OCI-LY7 (cell line): ENCODE measurements at regions of chr7 and their contacts with region 1.

Region 1: GRCh38 chr7:128425850-128426249 is 16.1 kb upstream of the IMPDH1 start:
- DNase-seq: peak; percentile 63
- H3K4me3 ChIP-seq: no peak overlapping the region
- H3K27ac ChIP-seq: no peak overlapping the region
- H3K4me1 ChIP-seq: no peaks in the 10 kb centered on the region
- CTCF ChIP-seq: peak; percentile 93

Region 2: GRCh38 chr7:128398016-128398840 is 27.6 kb before region 1 on chr7:
- CTCF ChIA-PET with region 1: interaction called, 3 read pairs
- POLR2A ChIA-PET with region 1: interaction called, 4 read pairs
- intact Hi-C with region 1: loop called (anchors 1 kb)
- DNase-seq: peak; percentile 24
- H3K4me3 ChIP-seq: no peak overlapping the region
- H3K27ac ChIP-seq: no peak overlapping the region
- H3K4me1 ChIP-seq: no peaks in the 10 kb centered on the region
- CTCF ChIP-seq: peak; percentile 94

Region 3: GRCh38 chr7:128459394-128459878 is 33.6 kb after region 1 on chr7:
- CTCF ChIA-PET with region 1: interaction called, 31 read pairs
- POLR2A ChIA-PET with region 1: interaction called, 5 read pairs
- intact Hi-C with region 1: loop called (anchors 1 kb)
- DNase-seq: peak; percentile 77
- H3K4me3 ChIP-seq: no peak overlapping the region
- H3K27ac ChIP-seq: no peak overlapping the region
- H3K4me1 ChIP-seq: peaks cover 33% of the 10 kb centered on the region
- CTCF ChIP-seq: peak; percentile 92

Region 4: DNA sequence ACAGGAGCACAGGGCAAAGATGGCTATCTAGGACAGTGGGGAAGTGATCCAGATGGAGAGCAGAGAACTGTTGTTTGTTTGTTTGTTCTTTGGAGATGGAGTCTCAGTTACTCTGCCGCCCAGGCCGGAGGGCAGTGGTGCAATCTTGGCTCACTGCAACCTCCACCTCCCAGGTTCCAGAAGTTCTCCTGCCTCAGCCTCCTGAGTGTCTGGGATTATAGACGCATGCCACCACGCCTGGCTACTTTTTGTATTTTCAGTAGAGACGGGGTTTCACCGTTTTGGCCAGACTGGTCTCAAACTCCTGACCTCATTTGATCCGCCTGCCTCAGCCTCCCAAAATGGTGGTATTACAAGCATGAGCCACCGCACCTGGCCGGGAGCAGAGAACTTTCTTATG is 71.6 kb after region 1 on chr7:
- CTCF ChIA-PET with region 1: no interaction called
- POLR2A ChIA-PET with region 1: no interaction called
- intact Hi-C with region 1: no loop called
- DNase-seq: no peak
- H3K4me3 ChIP-seq: no peak overlapping the region
- H3K27ac ChIP-seq: no peak overlapping the region
- H3K4me1 ChIP-seq: no peaks in the 10 kb centered on the region
- CTCF ChIP-seq: no peak

Region 5: DNA sequence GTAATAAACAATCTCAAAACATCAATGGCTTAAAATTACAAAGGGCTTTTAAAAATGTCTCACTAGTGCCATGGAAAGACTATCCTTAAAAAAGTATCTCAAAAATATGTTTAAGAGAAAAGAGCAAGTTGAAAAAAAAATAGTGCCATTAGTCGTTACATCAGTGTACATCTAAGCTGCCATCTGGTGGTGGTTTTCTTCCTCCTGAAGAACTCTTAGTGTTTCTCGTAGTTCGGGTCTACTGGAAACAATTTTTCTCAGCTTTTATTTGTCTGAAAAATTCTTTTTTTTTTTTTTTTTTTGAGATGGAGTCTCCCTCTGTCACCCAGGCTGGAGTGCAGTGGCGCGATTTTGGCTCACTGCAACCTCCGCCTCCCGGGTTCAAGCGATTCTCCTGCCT is 240.3 kb after region 1 on chr7:
- CTCF ChIA-PET with region 1: no interaction called
- POLR2A ChIA-PET with region 1: no interaction called
- intact Hi-C with region 1: loop called (anchors 5 kb)
- DNase-seq: peak; percentile 68
- H3K4me3 ChIP-seq: no peak overlapping the region
- H3K27ac ChIP-seq: no peak overlapping the region
- H3K4me1 ChIP-seq: no peaks in the 10 kb centered on the region
- CTCF ChIP-seq: peak; percentile 76

Region 6: GRCh38 chr7:129095258-129095657 is 669.4 kb after region 1 on chr7:
- CTCF ChIA-PET with region 1: no interaction called
- POLR2A ChIA-PET with region 1: no interaction called
- intact Hi-C with region 1: no loop called
- DNase-seq: peak; percentile 92
- H3K4me3 ChIP-seq: peak overlapping the region; percentile 15
- H3K27ac ChIP-seq: peak overlapping the region; percentile 77
- H3K4me1 ChIP-seq: peaks cover 66% of the 10 kb centered on the region
- CTCF ChIP-seq: no peak